CD4-positive, alpha-beta T cell (primary cell): ENCODE measurements at regions of chr6 and their contacts with region 1.

Region 1: DNA sequence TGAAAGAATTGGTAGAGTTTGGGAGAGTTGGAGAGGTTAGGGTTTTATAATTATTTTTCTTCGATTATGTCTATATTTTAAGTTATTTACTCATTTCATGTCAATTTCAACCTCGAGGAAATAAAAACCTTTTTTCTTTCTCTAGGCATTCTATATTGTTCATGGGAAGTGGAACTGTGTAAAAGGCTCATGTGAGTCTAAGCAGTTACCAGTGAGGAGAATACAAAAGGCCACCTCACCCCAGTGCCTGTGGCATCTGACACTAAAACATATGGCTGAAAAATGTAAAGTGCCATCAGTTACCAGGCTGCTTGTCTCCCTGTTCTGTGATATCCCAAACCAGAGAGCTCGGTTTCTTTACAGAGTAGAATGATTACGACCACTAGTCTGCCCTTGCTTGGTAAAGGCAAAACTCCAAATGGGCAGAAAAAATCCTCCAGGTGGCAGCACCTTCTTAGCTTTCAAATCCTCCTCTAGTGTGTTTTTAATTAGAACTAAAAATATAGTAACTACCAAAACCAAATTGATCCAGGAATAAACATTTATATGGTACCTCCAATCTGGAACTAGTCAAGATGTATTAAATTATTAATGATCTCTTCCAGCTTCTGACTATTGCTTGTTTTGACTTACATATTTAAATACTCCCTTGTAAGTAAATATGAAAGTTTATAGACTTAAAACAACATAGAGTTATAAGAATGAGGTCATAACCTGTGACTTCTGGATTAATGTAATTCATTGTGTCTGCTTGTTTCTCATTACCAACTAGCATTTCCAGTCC is 122.6 kb upstream of the MCHR2 start:
- DNase-seq: peak in 4 of 14 experiments; percentile 7 to 29 (median 25)
- ATAC-seq: no peak
- H3K4me3 ChIP-seq: no peak overlapping the region
- H3K4me3 Mint-ChIP-seq: no peak overlapping the region
- H3K27ac ChIP-seq: no peak overlapping the region
- H3K27ac Mint-ChIP-seq: no peak overlapping the region
- H3K4me1 ChIP-seq: no peaks in the 10 kb centered on the region
- H3K4me1 Mint-ChIP-seq: no peaks in the 10 kb centered on the region
- H3K27me3 ChIP-seq: no peaks in the 10 kb centered on the region
- H3K27me3 Mint-ChIP-seq: peaks cover 24% of the 10 kb centered on the region
- CTCF ChIP-seq: peak; percentile 28

Region 2: DNA sequence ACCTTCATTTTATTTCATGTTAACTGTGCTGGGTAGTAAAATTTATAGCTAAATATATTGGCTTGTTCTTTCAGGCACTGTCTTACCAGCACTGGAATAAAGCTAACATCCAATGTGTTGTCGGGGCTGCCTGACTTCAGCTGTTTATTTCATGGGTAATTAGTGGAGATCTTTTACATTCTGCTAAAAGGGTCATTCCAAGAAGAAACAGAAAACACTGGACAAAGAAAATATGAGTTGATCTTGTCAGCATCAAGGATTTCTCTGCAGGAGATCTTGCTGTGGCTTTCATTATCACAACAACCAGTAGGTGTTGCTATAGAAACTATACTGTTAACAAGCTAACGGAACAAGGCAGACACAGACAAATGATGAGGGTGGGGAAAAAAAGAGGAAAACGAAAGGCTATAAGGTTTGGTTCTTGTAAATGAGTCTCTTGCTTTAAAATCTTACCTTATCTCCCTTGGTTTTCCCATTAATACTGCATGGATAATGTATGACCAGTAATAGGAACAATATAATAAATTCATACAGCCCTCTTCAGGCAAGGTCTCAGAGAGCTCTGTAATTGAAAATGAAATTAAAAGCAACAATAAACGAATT is 141.3 kb after region 1 on chr6:
- CTCF ChIA-PET with region 1: no interaction called
- POLR2A ChIA-PET with region 1: no interaction called
- intact Hi-C with region 1: no loop called
- DNase-seq: peak in 2 of 14 experiments; percentile 4 to 39
- ATAC-seq: no peak
- H3K4me3 ChIP-seq: no peak overlapping the region
- H3K4me3 Mint-ChIP-seq: no peak overlapping the region
- H3K27ac ChIP-seq: no peak overlapping the region
- H3K27ac Mint-ChIP-seq: no peak overlapping the region
- H3K4me1 ChIP-seq: no peaks in the 10 kb centered on the region
- H3K4me1 Mint-ChIP-seq: no peaks in the 10 kb centered on the region
- H3K27me3 ChIP-seq: no peaks in the 10 kb centered on the region
- H3K27me3 Mint-ChIP-seq: no peaks in the 10 kb centered on the region
- CTCF ChIP-seq: no peak

Region 3: DNA sequence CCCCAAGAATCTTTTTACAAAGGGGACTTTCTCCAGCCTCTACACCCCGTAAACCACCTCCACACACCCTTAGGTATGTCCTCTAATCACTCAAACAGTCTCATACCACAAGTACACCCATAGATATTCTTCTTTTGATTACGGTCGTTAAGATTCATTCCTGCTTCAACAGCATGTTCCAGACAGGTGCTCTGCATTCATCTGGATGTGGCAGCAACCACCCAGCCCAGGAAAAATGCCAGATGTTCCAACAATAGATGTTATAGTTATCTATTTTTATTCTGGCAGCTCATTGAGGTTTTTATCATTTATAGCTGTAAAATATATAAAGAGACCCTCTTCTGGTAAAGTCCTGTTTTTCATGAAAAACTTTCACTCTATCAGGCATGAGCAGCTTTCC is 287.4 kb after region 1 on chr6:
- CTCF ChIA-PET with region 1: no interaction called
- POLR2A ChIA-PET with region 1: no interaction called
- intact Hi-C with region 1: no loop called
- DNase-seq: no peak
- ATAC-seq: no peak
- H3K4me3 ChIP-seq: no peak overlapping the region
- H3K4me3 Mint-ChIP-seq: no peak overlapping the region
- H3K27ac ChIP-seq: no peak overlapping the region
- H3K27ac Mint-ChIP-seq: no peak overlapping the region
- H3K4me1 ChIP-seq: no peaks in the 10 kb centered on the region
- H3K4me1 Mint-ChIP-seq: no peaks in the 10 kb centered on the region
- H3K27me3 ChIP-seq: peaks cover 0 to 3% of the 10 kb centered on the region in 2 experiments
- H3K27me3 Mint-ChIP-seq: no peaks in the 10 kb centered on the region
- CTCF ChIP-seq: no peak

Region 4: GRCh38 chr6:100719883-100720682 is 603.5 kb after region 1 on chr6:
- CTCF ChIA-PET with region 1: no interaction called
- POLR2A ChIA-PET with region 1: no interaction called
- intact Hi-C with region 1: loop called in 1 of 2 experiments (anchors 5 kb)
- DNase-seq: peak in 2 of 14 experiments; percentile 7 to 34
- ATAC-seq: no peak
- H3K4me3 ChIP-seq: no peak overlapping the region
- H3K4me3 Mint-ChIP-seq: peak overlapping the region; percentile 20
- H3K27ac ChIP-seq: no peak overlapping the region
- H3K27ac Mint-ChIP-seq: no peak overlapping the region
- H3K4me1 ChIP-seq: no peaks in the 10 kb centered on the region
- H3K4me1 Mint-ChIP-seq: peaks cover 15% of the 10 kb centered on the region
- H3K27me3 ChIP-seq: no peaks in the 10 kb centered on the region
- H3K27me3 Mint-ChIP-seq: no peaks in the 10 kb centered on the region
- CTCF ChIP-seq: peak; percentile 60